HCT116 (cell line): ENCODE measurements at regions of chr16 and their contacts with region 1.

Region 1: GRCh38 chr16:21083729-21084268 is 66.8 kb downstream of the DNAH3 start:
- DNase-seq: peak; percentile 44
- ATAC-seq: peak; percentile 97
- H3K4me3 ChIP-seq: no peak overlapping the region
- H3K27ac ChIP-seq: no peak overlapping the region
- H3K4me1 ChIP-seq: no peaks in the 10 kb centered on the region
- H3K27me3 ChIP-seq: no peaks in the 10 kb centered on the region
- CTCF ChIP-seq: peak; percentile 79 to 88 (median 81); a peak in 5 of 6 replicates
- POLR2A ChIP-seq: no peak
- RAD21 ChIP-seq: peak; percentile 92

Region 2: DNA sequence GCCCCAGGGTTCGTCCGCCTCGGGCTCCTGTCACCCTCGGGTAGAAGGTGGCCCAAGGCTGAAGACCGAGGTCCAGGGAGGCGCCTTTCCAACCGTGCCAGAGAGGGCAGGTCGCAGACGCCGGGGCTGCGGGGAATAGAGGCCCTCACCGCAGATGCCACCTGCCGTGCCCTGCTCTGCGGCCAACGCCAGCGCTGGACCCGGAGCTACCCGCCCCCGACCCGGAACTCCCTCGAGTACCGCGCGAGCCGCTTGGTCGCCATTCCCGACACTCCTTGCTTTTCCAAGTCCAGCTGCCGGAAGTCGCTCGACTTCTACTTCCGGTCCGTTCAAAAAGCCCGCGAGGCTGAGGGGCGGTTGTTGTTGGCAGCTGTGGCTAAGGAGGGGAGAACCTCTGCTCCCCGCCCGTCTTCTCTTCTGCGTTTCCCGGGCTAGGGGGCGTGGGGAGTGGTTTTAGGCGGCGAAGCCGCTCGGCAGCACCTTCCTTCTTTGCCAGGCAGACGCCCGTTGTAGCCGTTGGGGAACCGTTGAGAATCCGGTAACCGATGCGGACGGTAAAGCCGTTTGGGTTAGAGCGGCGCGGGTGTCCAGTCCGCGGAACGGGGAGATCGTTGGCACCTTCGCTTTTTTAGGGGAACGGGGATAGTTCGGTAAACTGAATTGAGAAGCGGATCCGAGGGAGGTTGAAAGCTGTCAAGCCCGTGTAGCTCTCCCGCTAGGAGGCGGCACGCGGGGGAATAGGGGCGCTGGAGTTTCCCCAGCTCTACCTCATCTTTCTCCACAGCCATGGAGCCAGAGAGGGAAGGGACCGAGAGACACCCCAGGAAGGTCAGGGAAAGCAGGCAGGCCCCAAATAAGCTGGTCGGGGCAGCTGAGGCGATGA is 277.4 kb before region 1 on chr16 and contains the starts of genes ERI2 and REXO5:
- CTCF ChIA-PET with region 1: interaction called, 3 read pairs
- POLR2A ChIA-PET with region 1: no interaction called
- RAD21 ChIA-PET with region 1: no interaction called
- intact Hi-C with region 1: loop called (anchors 5 kb)
- DNase-seq: peak; percentile 91
- ATAC-seq: peak; percentile 84
- H3K4me3 ChIP-seq: peak within 1 kb of the TSS; percentile 92 to 95
- H3K27ac ChIP-seq: peak within 1 kb of the TSS; percentile 90
- H3K4me1 ChIP-seq: peaks cover 8 to 16% of the 10 kb centered on the region in 2 experiments
- H3K27me3 ChIP-seq: no peaks in the 10 kb centered on the region
- CTCF ChIP-seq: peak; percentile 32 to 45 (median 44); a peak in 5 of 6 replicates
- POLR2A ChIP-seq: peak; percentile 95
- RAD21 ChIP-seq: no peak
- total RNA-seq, gene ERI2: 42.1 TPM
- total RNA-seq, gene REXO5: 10.5 TPM